ENCODE measurements at regions of chr6 and their contacts with region 1.

Region 1: DNA sequence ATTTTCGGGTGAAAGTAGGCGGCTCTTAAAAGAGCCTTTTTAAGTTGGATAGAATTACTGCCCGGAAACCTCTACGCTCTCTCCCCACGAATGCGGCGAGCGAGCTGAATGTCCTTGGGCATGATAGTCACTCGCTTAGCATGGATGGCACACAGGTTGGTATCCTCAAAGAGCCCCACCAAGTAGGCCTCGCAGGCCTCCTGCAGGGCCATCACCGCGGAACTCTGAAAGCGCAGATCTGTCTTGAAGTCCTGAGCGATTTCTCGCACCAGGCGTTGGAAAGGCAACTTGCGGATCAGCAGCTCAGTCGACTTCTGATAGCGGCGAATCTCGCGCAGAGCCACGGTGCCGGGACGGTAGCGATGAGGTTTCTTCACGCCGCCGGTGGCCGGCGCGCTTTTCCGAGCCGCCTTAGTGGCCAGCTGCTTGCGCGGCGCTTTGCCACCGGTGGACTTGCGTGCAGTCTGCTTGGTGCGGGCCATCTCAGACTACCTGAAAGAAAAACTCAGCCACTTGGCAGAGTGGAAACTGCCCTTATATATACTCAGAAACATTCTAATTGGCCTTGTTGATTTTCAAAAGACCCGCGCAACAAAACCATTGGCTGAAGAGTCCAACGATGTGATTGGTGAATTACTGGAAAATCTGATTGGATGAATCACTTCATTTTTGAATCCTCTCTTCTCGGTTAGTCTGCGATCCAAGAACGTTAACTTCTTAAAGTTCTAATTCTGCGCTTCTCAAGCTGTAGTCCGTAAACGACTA is 93.9 kb upstream of the BTN3A2 start:
- DNase-seq: peak; percentile 80
- H3K4me3 Mint-ChIP-seq: no peak overlapping the region
- H3K27ac Mint-ChIP-seq: no peak overlapping the region
- H3K4me1 Mint-ChIP-seq: peaks cover 45% of the 10 kb centered on the region
- H3K27me3 Mint-ChIP-seq: no peaks in the 10 kb centered on the region

Region 2: DNA sequence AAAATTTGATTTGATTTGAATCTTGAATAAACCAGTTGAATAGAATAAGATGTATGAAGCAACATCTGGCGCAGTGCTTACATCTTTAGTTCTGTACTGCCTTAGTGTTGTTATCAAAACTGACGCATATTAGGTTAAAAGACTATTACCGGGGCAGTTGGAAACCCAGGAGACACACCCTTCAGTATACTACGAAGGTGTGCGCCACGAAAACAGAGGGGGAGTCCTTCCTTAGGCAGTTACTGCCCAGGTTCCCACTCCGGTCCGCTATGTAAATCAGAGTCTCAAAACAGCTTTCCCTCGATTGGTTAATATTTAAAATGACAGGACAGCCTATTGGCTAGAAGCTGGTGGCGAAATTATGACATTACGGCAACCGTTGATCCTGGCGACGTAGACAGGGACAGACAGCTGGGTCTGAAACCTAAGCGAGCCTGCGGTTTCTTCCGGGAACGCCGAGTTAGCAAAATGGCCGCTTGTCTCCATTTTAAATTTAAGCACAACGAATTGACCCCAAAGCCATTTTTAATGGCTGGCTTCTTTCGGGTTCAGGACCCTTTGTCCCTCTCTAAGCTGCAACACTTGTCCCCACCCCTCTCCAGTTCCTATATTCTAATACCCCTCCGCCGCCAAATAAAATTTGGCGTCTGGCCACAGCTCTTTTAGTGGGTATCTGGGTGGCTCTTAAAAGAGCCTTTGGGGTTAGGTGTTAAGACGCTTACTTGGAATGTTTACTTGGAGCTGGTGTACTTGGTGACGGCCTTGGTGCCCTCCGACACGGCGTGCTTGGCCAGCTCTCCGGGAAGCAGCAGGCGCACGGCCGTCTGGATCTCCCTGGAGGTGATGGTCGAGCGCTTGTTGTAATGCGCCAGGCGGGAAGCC is 148.1 kb before region 1 on chr6:
- intact Hi-C with region 1: loop called (anchors 1 kb)
- DNase-seq: peak; percentile 86
- H3K4me3 Mint-ChIP-seq: peak overlapping the region; percentile 99
- H3K27ac Mint-ChIP-seq: peak overlapping the region; percentile 100
- H3K4me1 Mint-ChIP-seq: peaks cover 49% of the 10 kb centered on the region
- H3K27me3 Mint-ChIP-seq: peaks cover 3% of the 10 kb centered on the region

Region 3: DNA sequence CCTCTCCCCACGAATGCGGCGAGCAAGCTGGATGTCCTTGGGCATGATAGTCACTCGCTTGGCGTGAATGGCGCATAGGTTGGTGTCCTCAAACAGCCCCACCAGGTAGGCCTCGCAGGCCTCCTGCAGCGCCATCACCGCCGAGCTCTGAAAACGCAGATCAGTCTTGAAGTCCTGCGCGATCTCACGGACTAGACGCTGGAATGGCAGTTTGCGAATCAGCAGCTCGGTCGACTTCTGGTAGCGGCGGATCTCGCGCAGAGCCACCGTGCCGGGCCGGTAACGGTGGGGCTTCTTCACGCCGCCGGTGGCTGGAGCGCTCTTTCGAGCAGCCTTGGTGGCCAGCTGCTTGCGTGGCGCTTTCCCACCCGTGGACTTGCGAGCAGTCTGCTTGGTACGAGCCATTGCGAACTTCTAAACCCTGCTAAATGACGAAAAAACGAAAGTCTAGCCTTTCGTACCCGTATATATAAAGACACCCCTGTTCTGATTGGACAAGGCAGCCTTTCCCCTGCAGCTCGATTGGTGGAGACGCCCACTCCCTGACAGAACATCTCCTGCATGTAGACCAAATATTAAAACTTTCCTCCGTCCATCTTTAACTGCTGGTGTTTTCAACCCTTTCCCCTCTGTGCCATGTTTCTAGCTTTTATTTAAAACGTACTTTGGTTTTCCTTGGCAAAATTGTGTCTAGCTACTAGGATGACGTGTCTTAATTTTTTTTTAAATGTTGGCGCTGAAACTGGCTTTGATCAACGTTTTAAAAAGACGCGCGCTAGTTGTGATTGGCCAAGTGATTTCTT is 74.0 kb before region 1 on chr6:
- intact Hi-C with region 1: loop called (anchors 1 kb)
- DNase-seq: peak; percentile 84
- H3K4me3 Mint-ChIP-seq: peak overlapping the region; percentile 92
- H3K27ac Mint-ChIP-seq: peak overlapping the region; percentile 95
- H3K4me1 Mint-ChIP-seq: peaks cover 54% of the 10 kb centered on the region
- H3K27me3 Mint-ChIP-seq: no peaks in the 10 kb centered on the region

Region 4: GRCh38 chr6:26234421-26235296 is 36.4 kb before region 1 on chr6:
- intact Hi-C with region 1: loop called (anchors 1 kb)
- DNase-seq: peak; percentile 79
- H3K4me3 Mint-ChIP-seq: peak overlapping the region; percentile 89
- H3K27ac Mint-ChIP-seq: peak overlapping the region; percentile 100
- H3K4me1 Mint-ChIP-seq: peaks cover 52% of the 10 kb centered on the region
- H3K27me3 Mint-ChIP-seq: no peaks in the 10 kb centered on the region

Region 5: DNA sequence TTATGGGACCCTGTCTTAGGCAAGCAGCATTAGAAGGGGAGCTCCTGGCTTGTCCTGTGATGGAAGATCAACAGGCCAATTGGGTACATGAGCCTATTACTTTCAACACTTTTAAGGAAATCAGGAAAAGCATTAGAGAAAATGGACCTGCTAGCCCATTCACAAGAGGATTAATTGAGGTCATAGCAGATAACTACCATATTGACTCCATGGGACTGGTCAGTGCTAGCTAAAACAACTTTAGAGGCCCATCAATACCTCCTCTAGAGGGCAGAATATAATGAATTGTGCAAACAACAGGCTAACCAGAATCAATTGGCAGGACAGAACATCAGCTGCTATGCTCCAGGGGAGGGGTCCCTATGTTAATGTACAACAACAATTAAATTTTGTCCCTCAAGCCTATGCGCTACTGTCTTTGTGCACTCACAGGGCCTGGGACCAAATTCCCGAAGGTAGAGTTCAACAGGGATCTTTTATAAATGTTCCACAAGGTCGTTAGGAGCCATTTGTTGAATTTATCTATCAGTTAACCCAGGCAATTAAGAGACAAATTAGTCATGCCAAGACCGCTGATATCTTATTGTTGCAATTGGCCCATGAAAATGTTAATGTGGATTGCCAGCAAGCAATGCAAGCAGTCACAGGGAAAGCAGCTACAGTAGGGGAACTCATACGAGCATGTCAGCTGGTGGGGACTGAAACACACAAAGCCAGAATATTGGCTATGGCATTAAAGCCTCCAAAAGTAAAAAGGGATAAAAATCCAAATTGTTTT is 12.7 kb before region 1 on chr6:
- intact Hi-C with region 1: no loop called
- DNase-seq: no peak
- H3K4me3 Mint-ChIP-seq: no peak overlapping the region
- H3K27ac Mint-ChIP-seq: no peak overlapping the region
- H3K4me1 Mint-ChIP-seq: peaks cover 12% of the 10 kb centered on the region
- H3K27me3 Mint-ChIP-seq: peaks cover 3% of the 10 kb centered on the region

Region 6: DNA sequence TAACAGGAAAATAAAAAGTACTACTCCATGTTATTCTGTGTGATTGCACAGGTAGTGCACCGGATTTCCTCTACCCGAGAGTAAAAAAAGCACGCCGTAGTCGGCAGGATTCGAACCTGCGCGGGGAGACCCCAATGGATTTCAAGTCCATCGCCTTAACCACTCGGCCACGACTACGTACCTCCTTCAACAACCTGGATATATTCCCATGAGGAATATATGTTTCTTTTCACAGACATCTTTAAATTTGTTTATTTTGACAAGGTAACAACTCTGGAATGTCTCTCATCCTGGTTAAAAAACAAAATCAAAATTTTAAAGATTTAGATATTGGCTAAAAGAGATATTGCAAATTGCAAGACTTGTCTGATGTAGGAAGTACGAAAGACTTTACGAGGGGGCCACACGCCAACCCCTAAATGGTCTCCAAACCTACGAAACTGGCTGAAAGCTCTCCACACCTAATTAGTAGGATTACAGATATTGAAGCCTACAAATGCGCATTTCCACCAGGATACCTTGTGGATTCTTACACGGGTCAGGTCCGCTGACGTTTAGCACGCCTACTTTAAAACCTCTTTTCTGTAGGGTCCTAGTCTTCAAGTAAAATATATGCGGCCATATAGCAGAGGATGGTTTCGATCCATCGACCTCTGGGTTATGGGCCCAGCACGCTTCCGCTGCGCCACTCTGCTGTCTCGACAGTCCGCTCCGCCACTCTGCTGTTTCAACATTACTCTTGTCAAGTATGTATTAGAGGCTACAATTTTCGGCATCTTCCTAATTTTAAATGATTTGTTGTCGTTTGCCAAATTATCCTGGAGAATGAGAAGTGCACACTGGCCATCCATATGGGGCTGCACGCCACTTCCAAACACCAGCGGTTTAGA is 41.7 kb after region 1 on chr6:
- intact Hi-C with region 1: loop called (anchors 1 kb)
- DNase-seq: peak; percentile 72
- H3K4me3 Mint-ChIP-seq: peak overlapping the region; percentile 84
- H3K27ac Mint-ChIP-seq: peak overlapping the region; percentile 92
- H3K4me1 Mint-ChIP-seq: peaks cover 51% of the 10 kb centered on the region
- H3K27me3 Mint-ChIP-seq: no peaks in the 10 kb centered on the region

Region 7: GRCh38 chr6:27132532-27133280 is 861.6 kb after region 1 on chr6:
- intact Hi-C with region 1: loop called (anchors 1 kb)
- DNase-seq: peak; percentile 92
- H3K4me3 Mint-ChIP-seq: no peak overlapping the region
- H3K27ac Mint-ChIP-seq: no peak overlapping the region
- H3K4me1 Mint-ChIP-seq: peaks cover 34% of the 10 kb centered on the region
- H3K27me3 Mint-ChIP-seq: no peaks in the 10 kb centered on the region

Measured in activated T-helper 1 cell treated with anti-CD3 and anti-CD28 coated beads, Interleukin-12 subunit alpha, Interleukin-12 subunit beta, Interleukin-2, Interleukin-4 antibody, amounts not matched to agents 30 ng/mL and 10 ng/mL and 1 ng/mL, durations not matched to agents 14 hours and 24 hours and 36 hours (primary cell).